Activated naive CD4-positive, alpha-beta T cell treated with anti-CD3 and anti-CD28 coated beads for 36 hours (primary cell): ENCODE measurements at regions of chr14 and their contacts with region 1.

Region 1: DNA sequence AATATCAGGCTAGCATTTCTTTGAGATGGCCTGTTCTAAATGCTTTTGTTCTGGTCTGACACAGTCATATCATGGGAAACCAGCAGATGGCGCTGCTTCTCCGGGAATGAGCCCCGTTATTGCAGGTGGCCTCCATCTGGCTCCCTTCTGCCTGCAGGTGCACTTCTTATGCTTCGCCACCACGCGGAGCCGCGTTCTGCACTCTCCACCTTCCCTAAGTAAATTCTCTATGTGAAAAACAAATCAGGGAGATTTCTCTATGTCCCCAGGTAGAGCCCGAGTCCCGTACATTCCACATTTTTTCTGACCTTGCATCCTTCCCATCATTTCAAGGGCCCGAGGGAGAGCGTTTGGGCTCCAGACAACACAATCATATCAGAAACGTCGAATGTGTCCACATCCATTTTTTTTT is 26.2 kb downstream of the GLRX5 start:
- DNase-seq: peak; percentile 96
- H3K4me3 Mint-ChIP-seq: no peak overlapping the region
- H3K27ac Mint-ChIP-seq: no peak overlapping the region
- H3K4me1 Mint-ChIP-seq: no peaks in the 10 kb centered on the region
- H3K27me3 Mint-ChIP-seq: peaks cover 2% of the 10 kb centered on the region

Region 2: GRCh38 chr14:95683793-95684192 is 122.8 kb after region 1 on chr14:
- CTCF ChIA-PET with region 1: interaction called, 9 read pairs
- intact Hi-C with region 1: loop called (anchors 1 kb)
- DNase-seq: peak; percentile 50
- H3K4me3 Mint-ChIP-seq: no peak overlapping the region
- H3K27ac Mint-ChIP-seq: no peak overlapping the region
- H3K4me1 Mint-ChIP-seq: no peaks in the 10 kb centered on the region
- H3K27me3 Mint-ChIP-seq: peaks cover 16% of the 10 kb centered on the region

Region 3: GRCh38 chr14:95774265-95775160 is 213.5 kb after region 1 on chr14:
- CTCF ChIA-PET with region 1: interaction called, 21 read pairs
- intact Hi-C with region 1: loop called (anchors 1 kb)
- DNase-seq: peak; percentile 76
- H3K4me3 Mint-ChIP-seq: no peak overlapping the region
- H3K27ac Mint-ChIP-seq: no peak overlapping the region
- H3K4me1 Mint-ChIP-seq: peaks cover 2% of the 10 kb centered on the region
- H3K27me3 Mint-ChIP-seq: peaks cover 7% of the 10 kb centered on the region

Region 4: DNA sequence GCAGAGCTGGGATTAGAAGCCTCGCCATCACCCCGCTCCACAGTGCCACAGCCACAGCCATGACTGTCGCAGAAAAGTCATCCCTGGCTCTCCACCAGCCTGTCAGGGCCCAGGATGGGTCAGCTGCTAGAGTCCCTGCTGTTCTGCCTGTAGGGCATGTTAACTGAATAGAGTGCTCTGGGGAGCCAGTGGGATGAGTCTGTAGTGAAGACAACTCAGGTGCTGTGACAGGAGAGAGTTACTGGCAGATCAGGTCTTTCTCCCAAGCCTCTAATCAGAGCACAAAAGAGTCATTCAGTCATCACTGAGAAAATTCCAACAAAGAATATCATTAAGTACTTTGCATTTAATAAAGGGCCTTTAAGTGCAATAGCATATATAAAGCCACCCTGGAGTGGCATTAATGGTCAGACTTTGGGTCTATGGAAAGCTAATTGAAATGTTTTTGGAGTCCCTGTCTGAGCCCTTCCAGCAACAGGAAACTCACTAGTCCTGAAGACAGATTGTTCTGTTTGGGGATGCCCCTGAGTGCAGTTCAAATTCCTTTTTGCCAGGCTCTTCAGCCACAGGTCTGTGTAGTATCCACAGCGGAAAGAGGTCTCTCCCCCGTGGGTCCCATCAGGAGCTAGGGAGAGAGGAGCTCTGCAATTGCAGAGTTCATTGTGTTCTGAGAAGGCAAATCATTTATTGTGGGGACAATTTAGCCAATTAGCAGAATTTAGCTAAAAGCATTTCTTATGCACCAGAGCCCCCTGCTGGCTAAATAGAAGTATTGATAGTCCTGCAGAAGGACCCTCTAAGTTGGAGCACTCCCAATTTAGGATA is 433.0 kb after region 1 on chr14:
- CTCF ChIA-PET with region 1: interaction called, 8 read pairs
- intact Hi-C with region 1: loop called (anchors 1 kb)
- DNase-seq: peak; percentile 52
- H3K4me3 Mint-ChIP-seq: no peak overlapping the region
- H3K27ac Mint-ChIP-seq: no peak overlapping the region
- H3K4me1 Mint-ChIP-seq: no peaks in the 10 kb centered on the region
- H3K27me3 Mint-ChIP-seq: peaks cover 37% of the 10 kb centered on the region

Region 5: GRCh38 chr14:96275177-96276112 is 714.4 kb after region 1 on chr14:
- CTCF ChIA-PET with region 1: no interaction called
- intact Hi-C with region 1: loop called (anchors 10 kb)
- DNase-seq: peak; percentile 83
- H3K4me3 Mint-ChIP-seq: no peak overlapping the region
- H3K27ac Mint-ChIP-seq: no peak overlapping the region
- H3K4me1 Mint-ChIP-seq: peaks cover 2% of the 10 kb centered on the region
- H3K27me3 Mint-ChIP-seq: no peaks in the 10 kb centered on the region